Activated CD4-positive, alpha-beta T cell treated with anti-CD3 and anti-CD28 coated beads for 36 hours (primary cell): ENCODE measurements at regions of chr1 and their contacts with region 1.

Region 1: DNA sequence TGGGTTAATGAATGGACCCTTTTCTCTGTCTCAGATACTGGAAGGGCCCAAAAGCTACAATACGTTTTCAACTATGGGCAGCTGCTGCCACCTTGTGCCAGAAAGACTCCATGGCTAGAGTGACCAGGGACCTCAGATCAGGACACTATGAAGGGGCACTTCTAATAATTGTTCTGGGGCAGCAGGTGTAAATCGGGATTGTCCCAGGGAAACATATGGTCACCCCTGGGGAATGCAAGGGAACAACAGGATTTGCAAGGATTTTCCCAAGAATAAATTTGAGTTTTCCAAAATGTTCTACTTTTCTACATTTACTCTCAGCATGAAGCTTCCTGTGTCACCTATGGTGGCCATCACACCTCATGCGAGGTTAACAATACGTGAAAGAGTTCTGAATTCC is 12.0 kb upstream of the FCAMR start:
- DNase-seq: peak; percentile 74
- ATAC-seq: peak; percentile 81
- H3K4me3 Mint-ChIP-seq: no peak overlapping the region
- H3K27ac Mint-ChIP-seq: no peak overlapping the region
- H3K4me1 Mint-ChIP-seq: peaks cover 3% of the 10 kb centered on the region
- H3K27me3 Mint-ChIP-seq: peaks cover 2% of the 10 kb centered on the region

Region 2: DNA sequence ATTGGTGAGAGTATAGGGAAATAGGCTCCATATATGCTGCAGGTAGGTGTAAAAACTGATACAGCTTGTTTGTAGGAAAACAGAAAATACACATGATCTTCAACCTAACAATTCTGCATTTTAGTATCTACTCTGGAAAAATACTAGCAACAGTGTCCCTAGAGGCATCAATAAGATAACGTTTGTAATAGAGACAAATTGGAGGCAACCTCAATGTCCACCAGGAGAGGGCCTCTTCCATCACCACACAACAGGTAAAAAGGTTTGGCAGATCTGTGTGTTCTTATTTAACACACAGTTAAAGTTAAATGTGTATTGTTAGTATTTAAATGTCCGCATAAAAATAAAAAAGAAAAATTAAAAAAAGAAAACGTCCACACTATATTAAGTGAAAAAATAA is 375.4 kb before region 1 on chr1:
- CTCF ChIA-PET with region 1: no interaction called
- POLR2A ChIA-PET with region 1: no interaction called
- intact Hi-C with region 1: loop called in 1 of 2 experiments (anchors 1 kb)
- DNase-seq: no peak
- ATAC-seq: no peak
- H3K4me3 Mint-ChIP-seq: no peak overlapping the region
- H3K27ac Mint-ChIP-seq: peak overlapping the region; percentile 64
- H3K4me1 Mint-ChIP-seq: peaks cover 45% of the 10 kb centered on the region
- H3K27me3 Mint-ChIP-seq: no peaks in the 10 kb centered on the region

Region 3: DNA sequence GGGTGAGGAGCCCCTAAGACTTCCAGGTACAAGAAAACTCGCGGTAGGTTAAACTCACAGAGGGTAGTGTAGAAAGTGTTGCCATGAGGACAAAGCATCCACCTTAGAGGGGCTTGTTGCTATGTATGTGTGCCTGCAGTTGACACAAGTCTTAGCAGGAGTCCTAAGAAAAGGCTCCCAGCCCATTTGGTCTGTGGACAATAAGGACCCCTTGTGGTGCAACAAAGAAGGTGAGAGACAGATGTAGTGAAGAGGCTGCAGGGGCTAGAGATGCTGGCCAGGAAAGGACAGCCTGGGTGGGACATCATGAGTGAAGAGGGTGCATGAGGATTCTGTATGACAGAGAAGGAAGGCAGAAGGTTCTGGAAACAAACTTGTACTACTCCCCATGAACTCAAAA is 173.6 kb before region 1 on chr1:
- CTCF ChIA-PET with region 1: interaction called, 22 read pairs
- POLR2A ChIA-PET with region 1: no interaction called
- intact Hi-C with region 1: loop called (anchors 1 to 5 kb)
- DNase-seq: peak; percentile 63
- ATAC-seq: peak; percentile 83
- H3K4me3 Mint-ChIP-seq: no peak overlapping the region
- H3K27ac Mint-ChIP-seq: no peak overlapping the region
- H3K4me1 Mint-ChIP-seq: peaks cover 39% of the 10 kb centered on the region
- H3K27me3 Mint-ChIP-seq: peaks cover 2% of the 10 kb centered on the region

Region 4: GRCh38 chr1:206925106-206925736 is 57.0 kb before region 1 on chr1:
- CTCF ChIA-PET with region 1: interaction called, 33 read pairs
- POLR2A ChIA-PET with region 1: no interaction called
- intact Hi-C with region 1: no loop called
- DNase-seq: peak; percentile 83
- ATAC-seq: peak; percentile 58
- H3K4me3 Mint-ChIP-seq: no peak overlapping the region
- H3K27ac Mint-ChIP-seq: no peak overlapping the region
- H3K4me1 Mint-ChIP-seq: peaks cover 28% of the 10 kb centered on the region
- H3K27me3 Mint-ChIP-seq: no peaks in the 10 kb centered on the region

Region 5: GRCh38 chr1:206954459-206955342 is 27.5 kb before region 1 on chr1:
- CTCF ChIA-PET with region 1: interaction called, 11 read pairs
- POLR2A ChIA-PET with region 1: no interaction called
- intact Hi-C with region 1: no loop called
- DNase-seq: no peak
- ATAC-seq: no peak
- H3K4me3 Mint-ChIP-seq: no peak overlapping the region
- H3K27ac Mint-ChIP-seq: no peak overlapping the region
- H3K4me1 Mint-ChIP-seq: peaks cover 12% of the 10 kb centered on the region
- H3K27me3 Mint-ChIP-seq: no peaks in the 10 kb centered on the region

Region 6: GRCh38 chr1:206967096-206967849 is 14.9 kb before region 1 on chr1:
- CTCF ChIA-PET with region 1: interaction called, 64 read pairs
- POLR2A ChIA-PET with region 1: no interaction called
- intact Hi-C with region 1: loop called in 1 of 2 experiments (anchors 2 kb)
- DNase-seq: no peak
- ATAC-seq: peak; percentile 64
- H3K4me3 Mint-ChIP-seq: no peak overlapping the region
- H3K27ac Mint-ChIP-seq: peak overlapping the region; percentile 40
- H3K4me1 Mint-ChIP-seq: peaks cover 32% of the 10 kb centered on the region
- H3K27me3 Mint-ChIP-seq: no peaks in the 10 kb centered on the region

Region 7: DNA sequence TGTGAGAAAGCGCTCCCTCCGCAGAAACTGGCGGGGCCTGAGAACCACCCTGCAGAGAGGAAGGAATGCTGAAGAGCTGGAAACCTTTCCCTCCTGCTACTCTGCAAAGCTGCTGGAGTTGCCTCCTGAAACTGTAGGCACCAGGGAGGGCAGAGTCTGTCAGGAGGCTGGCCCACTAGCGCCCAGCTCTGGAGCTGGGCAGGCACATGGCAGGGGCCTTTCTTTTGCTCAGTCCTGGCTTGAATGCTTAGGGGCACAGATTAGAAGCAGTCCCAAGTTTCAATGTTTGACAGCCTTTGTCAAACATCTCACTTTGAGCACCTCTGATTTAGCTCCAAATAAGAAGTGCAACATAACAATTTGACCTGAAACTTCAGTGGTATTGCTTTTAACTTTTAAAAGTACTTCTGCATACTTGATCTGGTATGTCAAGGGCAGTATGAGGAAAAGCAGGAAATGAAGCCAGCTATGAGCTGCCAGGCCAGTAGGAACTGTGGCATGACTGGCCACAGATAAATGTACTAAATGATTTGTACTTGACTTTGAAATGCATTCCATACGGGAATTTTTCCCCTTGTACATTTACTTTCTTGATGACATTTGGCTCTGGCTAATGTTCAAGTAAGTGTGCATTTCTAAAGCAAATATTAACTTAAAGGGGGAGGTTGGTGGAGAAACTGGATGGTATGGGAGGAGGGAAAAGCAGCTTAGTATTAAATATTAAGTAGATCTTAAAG is 43.1 kb after region 1 on chr1:
- CTCF ChIA-PET with region 1: no interaction called
- POLR2A ChIA-PET with region 1: no interaction called
- intact Hi-C with region 1: no loop called
- DNase-seq: no peak
- ATAC-seq: no peak
- H3K4me3 Mint-ChIP-seq: no peak overlapping the region
- H3K27ac Mint-ChIP-seq: no peak overlapping the region
- H3K4me1 Mint-ChIP-seq: peaks cover 5% of the 10 kb centered on the region
- H3K27me3 Mint-ChIP-seq: peaks cover 13% of the 10 kb centered on the region